GM13977 (cell line): ENCODE measurements at regions of chr19 and their contacts with region 1.

Region 1: DNA sequence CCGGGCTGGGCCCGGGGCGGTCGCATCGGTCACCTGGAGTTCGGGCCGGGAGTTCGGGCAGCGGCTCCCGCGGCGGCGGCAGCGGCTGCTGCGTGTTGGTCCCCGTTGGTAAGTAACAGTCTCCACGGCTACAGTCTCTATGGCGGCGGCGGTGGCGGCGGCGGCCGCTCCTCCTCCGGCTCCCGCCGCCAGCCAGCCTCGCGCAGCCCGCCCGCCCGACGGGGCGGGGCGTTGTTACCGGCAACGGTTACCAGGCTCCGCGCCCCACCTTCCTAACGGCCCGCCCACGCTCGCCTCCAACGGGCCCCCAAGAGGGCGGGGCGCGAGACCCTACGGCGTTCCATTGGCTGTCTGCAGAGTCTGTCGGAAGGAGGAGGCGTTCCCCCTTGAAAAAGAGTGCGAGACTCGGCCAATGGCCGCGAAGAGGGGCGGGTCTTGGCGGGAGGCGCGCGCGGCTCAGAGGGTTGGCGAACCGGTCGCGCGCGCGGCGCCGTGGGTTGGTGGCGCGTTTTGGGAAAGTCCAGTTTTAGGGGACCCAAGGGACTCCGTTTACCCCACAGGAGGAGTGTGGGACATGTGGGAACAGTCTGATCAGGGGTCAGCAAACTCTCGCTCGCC is at the start of gene RFX2:
- DNase-seq: peak; percentile 99
- CTCF ChIP-seq: no peak

Region 2: GRCh38 chr19:6066661-6067646 is 43.5 kb before region 1 on chr19:
- in situ Hi-C with region 1: loop called (anchors 10 kb)
- DNase-seq: no peak
- CTCF ChIP-seq: no peak

Region 3: DNA sequence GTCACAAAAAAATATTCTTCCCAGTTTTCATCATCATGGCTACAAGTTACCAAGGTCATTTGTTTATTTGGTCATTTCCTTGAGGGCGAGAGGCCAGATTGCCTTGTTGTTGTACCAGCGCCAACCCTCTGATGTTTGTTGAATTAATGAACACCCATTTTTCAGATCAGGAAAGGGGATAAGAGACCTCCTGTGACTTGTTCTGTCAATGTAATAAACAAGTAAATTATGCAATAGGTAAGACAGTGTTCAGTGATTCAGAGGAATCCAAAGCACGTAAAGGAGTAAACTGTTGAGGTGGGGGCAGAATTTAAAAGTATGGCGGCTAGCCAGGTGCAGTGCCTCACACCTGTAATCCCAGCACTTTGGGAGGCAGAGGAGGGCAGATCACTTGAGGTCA is 91.5 kb after region 1 on chr19:
- in situ Hi-C with region 1: no loop called
- DNase-seq: no peak
- CTCF ChIP-seq: no peak